Activated T-helper 1 cell treated with anti-CD3 and anti-CD28 coated beads, Interleukin-12 subunit alpha, Interleukin-12 subunit beta, Interleukin-2, Interleukin-4 antibody, amounts not matched to agents 30 ng/mL and 10 ng/mL and 1 ng/mL, durations not matched to agents 14 hours and 24 hours and 36 hours (primary cell): ENCODE measurements at regions of chr14 and their contacts with region 1.

Region 1: GRCh38 chr14:37874429-37875191 is 279.2 kb downstream of the TTC6 start:
- DNase-seq: peak; percentile 65
- H3K4me3 Mint-ChIP-seq: no peak overlapping the region
- H3K27ac Mint-ChIP-seq: no peak overlapping the region
- H3K4me1 Mint-ChIP-seq: peaks cover 8% of the 10 kb centered on the region
- H3K27me3 Mint-ChIP-seq: no peaks in the 10 kb centered on the region

Region 2: GRCh38 chr14:37230551-37231194 is 643.9 kb before region 1 on chr14:
- intact Hi-C with region 1: loop called (anchors 1 kb)
- DNase-seq: no peak
- H3K4me3 Mint-ChIP-seq: no peak overlapping the region
- H3K27ac Mint-ChIP-seq: no peak overlapping the region
- H3K4me1 Mint-ChIP-seq: no peaks in the 10 kb centered on the region
- H3K27me3 Mint-ChIP-seq: no peaks in the 10 kb centered on the region

Region 3: DNA sequence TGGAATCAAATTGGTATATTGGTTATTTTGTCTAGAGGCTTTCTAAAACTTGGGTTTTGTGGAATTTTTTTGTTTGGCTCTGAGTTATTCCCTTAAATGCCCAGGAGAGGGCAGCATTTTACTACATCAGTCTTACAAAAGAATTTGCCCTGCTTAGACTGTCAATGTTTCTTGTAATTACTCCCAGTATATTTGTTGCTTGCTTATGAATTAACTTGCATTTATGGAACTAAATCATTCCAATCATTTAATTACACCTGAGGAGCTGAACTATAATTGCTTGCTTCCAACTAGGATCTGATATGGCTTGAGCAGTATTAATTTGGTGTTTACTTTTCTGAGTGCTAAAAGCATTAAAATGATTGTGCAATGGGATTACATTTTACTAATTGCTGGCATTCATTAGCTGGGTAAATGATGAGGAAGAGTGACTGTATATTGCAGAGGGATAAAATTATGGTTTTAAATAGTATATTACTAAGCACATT is 628.1 kb before region 1 on chr14:
- intact Hi-C with region 1: loop called (anchors 1 kb)
- DNase-seq: no peak
- H3K4me3 Mint-ChIP-seq: no peak overlapping the region
- H3K27ac Mint-ChIP-seq: no peak overlapping the region
- H3K4me1 Mint-ChIP-seq: no peaks in the 10 kb centered on the region
- H3K27me3 Mint-ChIP-seq: no peaks in the 10 kb centered on the region

Region 4: GRCh38 chr14:37709419-37710195 is 165.0 kb before region 1 on chr14:
- intact Hi-C with region 1: loop called (anchors 5 kb)
- DNase-seq: no peak
- H3K4me3 Mint-ChIP-seq: no peak overlapping the region
- H3K27ac Mint-ChIP-seq: no peak overlapping the region
- H3K4me1 Mint-ChIP-seq: no peaks in the 10 kb centered on the region
- H3K27me3 Mint-ChIP-seq: no peaks in the 10 kb centered on the region

Region 5: GRCh38 chr14:37763266-37763665 is 111.3 kb before region 1 on chr14:
- intact Hi-C with region 1: no loop called
- DNase-seq: no peak
- H3K4me3 Mint-ChIP-seq: no peak overlapping the region
- H3K27ac Mint-ChIP-seq: no peak overlapping the region
- H3K4me1 Mint-ChIP-seq: no peaks in the 10 kb centered on the region
- H3K27me3 Mint-ChIP-seq: no peaks in the 10 kb centered on the region